Aorta (tissue), 5 donors: ENCODE measurements at regions of chr17 and their contacts with region 1.

Region 1: DNA sequence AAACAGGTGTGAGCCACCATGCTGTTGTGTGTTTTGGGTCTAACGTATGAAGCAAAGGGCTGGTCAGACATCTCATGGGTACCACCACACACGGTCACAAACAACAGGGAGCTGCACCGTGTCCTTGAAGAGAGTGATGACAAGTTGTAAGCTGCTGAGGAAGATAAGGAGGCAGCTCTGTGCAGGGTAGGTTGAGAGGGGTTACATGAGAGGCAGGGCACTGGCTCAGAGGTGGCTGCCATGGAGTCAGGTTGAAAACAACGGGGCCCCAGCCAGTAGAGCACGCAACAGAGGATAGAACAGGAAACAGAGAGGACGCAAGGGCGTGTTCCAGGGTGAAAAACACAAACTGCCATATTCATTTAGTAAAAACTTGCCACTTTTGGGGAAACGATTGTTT is 52.2 kb downstream of the TRARG1 start:
- DNase-seq: peak in 1 of 2 donors; percentile 34
- ATAC-seq: no peak
- H3K4me3 ChIP-seq: no peak overlapping the region
- H3K27ac ChIP-seq: no peak overlapping the region
- H3K4me1 ChIP-seq: no peaks in the 10 kb centered on the region
- H3K27me3 ChIP-seq: no peaks in the 10 kb centered on the region

Region 2: GRCh38 chr17:1256699-1257098 is 75.0 kb before region 1 on chr17:
- intact Hi-C with region 1: loop called (anchors 5 kb)
- DNase-seq: no peak
- ATAC-seq: no peak
- H3K4me3 ChIP-seq: no peak overlapping the region
- H3K27ac ChIP-seq: no peak overlapping the region
- H3K4me1 ChIP-seq: no peaks in the 10 kb centered on the region
- H3K27me3 ChIP-seq: no peaks in the 10 kb centered on the region

Region 3: GRCh38 chr17:1275962-1276736 is 55.6 kb before region 1 on chr17:
- intact Hi-C with region 1: loop called (anchors 1 to 2 kb)
- DNase-seq: peak; percentile 79 to 91
- ATAC-seq: peak; percentile 65
- H3K4me3 ChIP-seq: no peak overlapping the region
- H3K27ac ChIP-seq: no peak overlapping the region
- H3K4me1 ChIP-seq: no peaks in the 10 kb centered on the region
- H3K27me3 ChIP-seq: no peaks in the 10 kb centered on the region

Region 4: GRCh38 chr17:1365445-1366039 is 33.8 kb after region 1 on chr17:
- intact Hi-C with region 1: no loop called
- DNase-seq: peak in 1 of 2 donors; percentile 61
- ATAC-seq: peak; percentile 89
- H3K4me3 ChIP-seq: no peak overlapping the region
- H3K27ac ChIP-seq: no peak overlapping the region
- H3K4me1 ChIP-seq: peaks cover under 1 to 5% of the 10 kb centered on the region in 2 donors
- H3K27me3 ChIP-seq: no peaks in the 10 kb centered on the region